OCI-LY7 (cell line): ENCODE measurements at regions of chr12 and their contacts with region 1.

Region 1: GRCh38 chr12:27142101-27142721 is 59.8 kb upstream of the C12orf71 start:
- DNase-seq: peak; percentile 57
- H3K4me3 ChIP-seq: no peak overlapping the region
- H3K27ac ChIP-seq: no peak overlapping the region
- H3K4me1 ChIP-seq: no peaks in the 10 kb centered on the region
- CTCF ChIP-seq: peak; percentile 97

Region 2: DNA sequence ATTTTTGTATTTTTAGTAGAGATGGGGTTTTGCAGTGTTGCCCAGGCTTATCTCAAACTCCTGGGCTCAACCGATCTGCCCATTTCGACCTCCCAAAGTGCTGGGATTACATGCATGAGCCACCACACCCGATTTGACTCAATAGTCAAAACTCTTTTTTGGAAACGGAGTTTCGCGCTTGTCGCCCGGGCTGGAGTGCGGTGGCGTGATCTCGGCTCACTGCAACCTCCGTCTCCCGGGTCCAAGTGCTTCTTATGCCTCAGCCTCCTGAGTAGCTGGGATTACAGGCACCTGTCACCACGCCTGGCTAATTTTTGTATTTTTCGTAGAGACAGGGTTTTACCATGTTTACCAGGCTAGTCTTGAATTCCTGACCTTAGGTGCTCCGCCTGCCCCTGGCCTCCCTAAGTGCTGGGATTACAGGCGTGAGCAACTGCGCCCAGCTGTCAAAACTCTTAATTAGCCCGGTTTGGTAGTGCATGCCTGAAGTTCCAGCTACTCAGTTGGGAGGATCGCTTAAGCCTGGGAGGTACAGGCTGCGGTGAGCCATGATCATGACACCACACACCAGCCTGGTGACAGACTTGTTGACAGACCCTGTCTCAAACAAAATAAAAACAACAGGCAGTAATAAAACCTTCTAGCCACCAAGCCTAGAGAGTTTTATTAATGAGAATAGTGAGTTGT is 107.5 kb before region 1 on chr12:
- CTCF ChIA-PET with region 1: no interaction called
- POLR2A ChIA-PET with region 1: no interaction called
- intact Hi-C with region 1: loop called (anchors 5 kb)
- DNase-seq: no peak
- H3K4me3 ChIP-seq: no peak overlapping the region
- H3K27ac ChIP-seq: no peak overlapping the region
- H3K4me1 ChIP-seq: no peaks in the 10 kb centered on the region
- CTCF ChIP-seq: no peak